ENCODE measurements at regions of chr12 and their contacts with region 1.

Region 1: DNA sequence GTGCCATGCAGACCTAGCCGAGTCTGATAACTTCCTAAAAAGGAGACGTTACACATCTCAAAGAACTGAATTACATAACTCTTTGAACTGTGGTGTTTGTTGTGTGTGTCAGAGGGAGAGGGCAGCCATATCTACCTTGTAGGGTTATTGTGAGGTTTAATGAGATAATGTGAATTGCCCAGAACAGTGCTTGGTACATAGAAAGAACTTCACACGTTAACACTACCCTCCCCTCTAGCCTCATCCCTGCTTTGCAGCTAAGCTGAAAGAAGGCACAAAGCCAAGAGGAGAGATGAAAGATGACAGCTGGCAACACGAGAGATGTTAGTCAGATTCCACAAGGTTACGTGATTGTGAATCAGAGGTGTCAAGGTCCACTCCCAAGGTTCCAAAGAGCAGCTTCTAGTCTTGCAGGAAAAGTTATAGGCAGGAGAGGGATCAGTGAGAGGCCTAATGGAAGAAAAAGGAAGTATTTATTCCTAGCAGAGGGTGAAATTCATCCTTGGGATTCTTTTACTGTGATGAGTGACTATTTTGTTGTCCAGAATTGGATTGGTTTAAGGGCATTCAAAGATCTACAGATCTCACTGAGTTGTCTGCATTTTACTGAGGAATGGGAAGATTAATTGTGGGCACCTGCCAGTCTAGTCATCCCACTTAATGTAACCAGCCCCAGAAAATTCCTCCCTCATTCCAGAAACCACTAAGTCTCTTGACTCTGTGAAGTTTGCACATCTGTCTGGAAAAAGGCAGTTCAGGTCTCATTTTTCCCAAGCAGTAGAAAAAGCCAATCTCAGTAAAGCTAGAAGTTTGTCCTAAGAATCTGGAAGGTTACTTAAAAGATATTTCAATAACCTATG is 25.9 kb upstream of the WNK1 start:
- DNase-seq: no peak
- H3K4me3 Mint-ChIP-seq: no peak overlapping the region
- H3K27ac Mint-ChIP-seq: no peak overlapping the region
- H3K4me1 Mint-ChIP-seq: peaks cover 71% of the 10 kb centered on the region
- H3K27me3 Mint-ChIP-seq: no peaks in the 10 kb centered on the region

Region 2: GRCh38 chr12:737122-737739 is 10.7 kb after region 1 on chr12:
- CTCF ChIA-PET with region 1: interaction called, 10 read pairs
- POLR2A ChIA-PET with region 1: no interaction called
- DNase-seq: no peak
- H3K4me3 Mint-ChIP-seq: no peak overlapping the region
- H3K27ac Mint-ChIP-seq: no peak overlapping the region
- H3K4me1 Mint-ChIP-seq: peaks cover 7% of the 10 kb centered on the region
- H3K27me3 Mint-ChIP-seq: peaks cover 2% of the 10 kb centered on the region

Region 3: DNA sequence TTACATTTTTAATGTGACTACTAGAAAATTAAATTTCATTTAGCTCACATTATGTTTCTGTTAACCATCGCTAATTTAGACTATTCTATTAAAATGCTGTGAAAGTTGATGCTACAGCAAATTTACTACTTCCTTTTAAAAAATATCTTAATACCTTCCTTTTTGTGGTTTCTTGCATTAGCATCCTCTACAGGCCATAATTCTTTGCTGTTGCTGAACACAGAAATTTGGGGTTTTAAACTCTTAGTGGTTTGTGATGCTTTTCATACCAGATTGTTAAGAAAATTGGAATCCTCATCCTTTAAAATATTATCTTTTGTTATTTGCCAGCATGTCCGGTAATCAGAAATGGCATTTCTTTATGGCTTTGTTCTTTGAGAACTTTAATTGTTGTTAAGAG is 44.0 kb after region 1 on chr12:
- CTCF ChIA-PET with region 1: no interaction called
- POLR2A ChIA-PET with region 1: no interaction called
- DNase-seq: no peak
- H3K4me3 Mint-ChIP-seq: no peak overlapping the region
- H3K27ac Mint-ChIP-seq: no peak overlapping the region
- H3K4me1 Mint-ChIP-seq: peaks cover 50% of the 10 kb centered on the region
- H3K27me3 Mint-ChIP-seq: no peaks in the 10 kb centered on the region

Region 4: DNA sequence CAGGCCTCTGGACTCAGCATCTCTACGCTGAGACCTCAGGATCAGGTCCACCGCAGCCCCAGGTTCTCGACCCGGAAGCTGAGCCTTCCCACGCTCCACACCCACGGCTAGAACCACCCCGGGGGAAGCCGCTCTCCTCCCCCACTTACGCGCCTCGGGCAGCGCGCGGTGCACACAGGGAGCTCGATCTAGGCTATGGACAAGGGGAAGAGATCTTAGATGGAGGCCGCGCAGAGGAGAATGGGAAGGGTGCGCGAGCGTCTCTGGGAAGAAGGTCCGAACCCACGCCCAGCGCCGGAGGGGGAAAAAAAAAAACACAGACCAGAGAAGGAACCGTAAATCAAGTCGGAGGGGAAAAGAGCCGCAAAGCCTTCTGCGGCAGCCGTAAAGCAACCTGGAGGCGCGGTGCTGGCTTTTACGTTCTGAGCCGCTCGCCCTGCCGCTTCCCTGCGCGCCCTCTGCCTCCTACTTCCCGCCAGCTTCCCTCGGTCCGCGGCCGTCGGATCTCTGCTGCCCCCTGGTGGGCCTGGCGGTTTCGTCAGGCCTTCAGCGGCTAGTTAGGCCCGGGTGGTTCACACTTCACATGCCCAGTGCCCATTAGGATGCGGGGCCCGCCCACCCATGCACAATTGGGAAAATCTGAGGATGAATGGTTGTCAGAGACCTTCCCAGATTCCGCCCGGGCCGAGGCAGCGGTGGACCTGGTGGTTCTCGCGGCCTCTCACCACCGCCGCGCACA is 223.1 kb after region 1 on chr12 and contains the start of gene RAD52:
- CTCF ChIA-PET with region 1: no interaction called
- POLR2A ChIA-PET with region 1: no interaction called
- DNase-seq: peak; percentile 97
- H3K4me3 Mint-ChIP-seq: peak within 1 kb of the TSS; percentile 98
- H3K27ac Mint-ChIP-seq: peak within 1 kb of the TSS; percentile 91
- H3K4me1 Mint-ChIP-seq: peaks cover 36% of the 10 kb centered on the region
- H3K27me3 Mint-ChIP-seq: no peaks in the 10 kb centered on the region
- total RNA-seq, gene RAD52: 18.5 to 19.4 TPM

Measured in activated CD4-positive, alpha-beta T cell treated with anti-CD3 and anti-CD28 coated beads, Interleukin-2, amount 10 ng/mL, durations not matched to agents 7 days and 5 days (primary cell).